ENCODE measurements at regions of chr14 and their contacts with region 1.

Region 1: GRCh38 chr14:71529848-71530247 is 402.4 kb upstream of the RGS6 start:
- DNase-seq: peak; percentile 9 to 86
- H3K4me3 ChIP-seq: peak overlapping the region; percentile 17 to 24
- H3K27ac ChIP-seq: peak overlapping the region; percentile 71 to 83
- H3K4me1 ChIP-seq: peaks cover 0 to 30% of the 10 kb centered on the region in 2 donors
- H3K27me3 ChIP-seq: no peaks in the 10 kb centered on the region
- CTCF ChIP-seq: no peak

Region 2: DNA sequence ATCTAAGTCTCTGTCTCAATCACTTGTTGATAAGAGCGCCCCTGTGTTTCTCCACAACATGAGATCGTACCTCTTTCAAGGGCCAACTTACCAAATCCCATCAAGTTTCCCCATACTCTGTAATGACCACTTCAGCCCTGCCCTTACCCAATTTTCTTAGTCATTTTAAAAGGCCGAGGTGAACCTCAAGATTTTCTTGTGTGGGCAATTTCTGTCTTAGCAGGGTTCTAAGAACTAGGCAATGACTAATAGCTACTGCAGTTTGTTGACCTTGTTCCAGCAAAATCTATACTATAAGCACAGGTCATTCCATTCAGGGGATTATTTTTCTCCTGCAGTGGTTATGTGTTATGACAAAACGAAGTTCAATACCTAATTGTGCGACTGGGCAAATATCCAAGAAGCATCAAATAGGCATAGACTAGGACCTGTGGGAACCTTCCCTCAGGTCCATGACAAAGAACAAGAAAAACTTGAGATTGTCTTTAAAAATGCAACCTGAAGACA is 262.8 kb before region 1 on chr14:
- intact Hi-C with region 1: no loop called
- DNase-seq: no peak
- H3K4me3 ChIP-seq: no peak overlapping the region
- H3K27ac ChIP-seq: no peak overlapping the region
- H3K4me1 ChIP-seq: no peaks in the 10 kb centered on the region
- H3K27me3 ChIP-seq: no peaks in the 10 kb centered on the region
- CTCF ChIP-seq: no peak

Region 3: GRCh38 chr14:71309753-71310152 is 220.1 kb before region 1 on chr14:
- intact Hi-C with region 1: no loop called
- DNase-seq: no peak
- H3K4me3 ChIP-seq: no peak overlapping the region
- H3K27ac ChIP-seq: no peak overlapping the region
- H3K4me1 ChIP-seq: no peaks in the 10 kb centered on the region
- H3K27me3 ChIP-seq: no peaks in the 10 kb centered on the region
- CTCF ChIP-seq: no peak

Region 4: DNA sequence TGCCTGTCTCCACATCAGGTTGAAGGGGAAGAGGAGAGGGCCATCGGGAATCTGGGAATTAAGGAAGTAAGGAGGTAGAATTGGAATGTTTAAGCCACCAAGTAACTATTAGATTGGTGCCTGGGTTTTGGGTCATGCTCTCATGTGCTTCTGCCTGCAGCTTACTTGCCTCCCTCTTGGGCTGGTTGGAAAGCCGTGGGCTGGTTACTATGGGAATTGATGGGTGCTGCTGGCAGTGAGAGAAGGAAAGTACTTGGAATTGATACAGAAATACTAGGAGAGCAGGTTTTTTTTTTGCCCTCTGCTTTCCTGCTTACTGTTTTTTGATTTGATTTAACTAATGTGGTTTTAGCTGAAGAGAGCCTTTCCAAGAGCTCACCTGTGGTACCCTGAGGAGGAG is 91.2 kb before region 1 on chr14:
- intact Hi-C with region 1: loop called (anchors 5 kb)
- DNase-seq: no peak
- H3K4me3 ChIP-seq: no peak overlapping the region
- H3K27ac ChIP-seq: peak overlapping the region; percentile 73 to 80
- H3K4me1 ChIP-seq: peaks cover 7 to 28% of the 10 kb centered on the region in 2 donors
- H3K27me3 ChIP-seq: no peaks in the 10 kb centered on the region
- CTCF ChIP-seq: no peak

Measured in ascending aorta (tissue), 2 donors.